Mammary epithelial cell (primary cell): ENCODE measurements at regions of chr9 and their contacts with region 1.

Region 1: GRCh38 chr9:119365291-119366027 is 3.8 kb downstream of the BRINP1 start:
- DNase-seq: peak; percentile 40
- H3K4me3 ChIP-seq: no peak overlapping the region
- H3K27ac ChIP-seq: no peak overlapping the region
- H3K4me1 ChIP-seq: peaks cover 8% of the 10 kb centered on the region
- H3K27me3 ChIP-seq: peaks cover 9% of the 10 kb centered on the region
- CTCF ChIP-seq: peak; percentile 59 to 83

Region 2: DNA sequence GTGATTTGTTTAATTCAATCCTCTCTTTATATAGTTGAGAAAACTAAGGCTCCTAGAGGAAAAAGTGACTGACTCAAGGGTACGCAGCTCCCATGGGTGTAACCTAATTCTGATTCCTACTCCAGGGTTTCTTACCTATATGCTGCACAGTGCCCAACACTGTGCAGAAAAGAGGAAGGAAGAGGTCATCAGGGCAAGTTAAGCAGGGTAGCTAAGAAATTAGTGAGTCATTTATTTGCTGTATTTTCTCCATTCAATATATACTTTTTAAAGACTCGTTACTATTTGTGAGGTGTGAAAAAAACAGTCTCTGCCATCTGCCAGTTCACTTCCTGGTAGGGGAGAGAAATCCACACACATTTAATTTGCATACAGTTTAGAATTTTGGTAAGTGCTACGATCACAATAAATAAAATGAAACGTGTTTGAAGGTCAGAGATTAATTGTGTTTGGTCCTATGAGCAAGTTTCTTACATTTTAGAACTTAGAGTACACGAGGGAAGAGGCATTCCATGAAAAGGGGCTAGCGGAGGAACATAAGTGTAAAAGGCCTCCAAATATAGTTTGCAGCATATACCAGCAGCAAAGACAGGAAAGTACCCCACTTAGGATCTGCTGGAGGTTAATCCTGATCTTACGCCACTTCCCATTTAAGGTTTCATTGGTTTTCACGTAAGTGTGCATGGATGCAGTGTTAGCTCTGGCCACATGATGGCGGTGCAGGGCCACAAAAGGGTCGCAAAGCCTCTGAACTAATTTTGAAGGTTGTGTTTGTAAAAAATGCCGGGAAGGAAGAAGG is 1721.1 kb before region 1 on chr9:
- CTCF ChIA-PET with region 1: no interaction called
- dilution Hi-C with region 1: no loop called
- in situ Hi-C with region 1: no loop called
- intact Hi-C with region 1: loop called (anchors 5 kb)
- DNase-seq: peak; percentile 55
- H3K4me3 ChIP-seq: peak overlapping the region; percentile 5 to 36 (median 24)
- H3K27ac ChIP-seq: no peak overlapping the region
- H3K4me1 ChIP-seq: no peaks in the 10 kb centered on the region
- H3K27me3 ChIP-seq: peaks cover 5% of the 10 kb centered on the region
- CTCF ChIP-seq: peak; percentile 98 to 99

Region 3: DNA sequence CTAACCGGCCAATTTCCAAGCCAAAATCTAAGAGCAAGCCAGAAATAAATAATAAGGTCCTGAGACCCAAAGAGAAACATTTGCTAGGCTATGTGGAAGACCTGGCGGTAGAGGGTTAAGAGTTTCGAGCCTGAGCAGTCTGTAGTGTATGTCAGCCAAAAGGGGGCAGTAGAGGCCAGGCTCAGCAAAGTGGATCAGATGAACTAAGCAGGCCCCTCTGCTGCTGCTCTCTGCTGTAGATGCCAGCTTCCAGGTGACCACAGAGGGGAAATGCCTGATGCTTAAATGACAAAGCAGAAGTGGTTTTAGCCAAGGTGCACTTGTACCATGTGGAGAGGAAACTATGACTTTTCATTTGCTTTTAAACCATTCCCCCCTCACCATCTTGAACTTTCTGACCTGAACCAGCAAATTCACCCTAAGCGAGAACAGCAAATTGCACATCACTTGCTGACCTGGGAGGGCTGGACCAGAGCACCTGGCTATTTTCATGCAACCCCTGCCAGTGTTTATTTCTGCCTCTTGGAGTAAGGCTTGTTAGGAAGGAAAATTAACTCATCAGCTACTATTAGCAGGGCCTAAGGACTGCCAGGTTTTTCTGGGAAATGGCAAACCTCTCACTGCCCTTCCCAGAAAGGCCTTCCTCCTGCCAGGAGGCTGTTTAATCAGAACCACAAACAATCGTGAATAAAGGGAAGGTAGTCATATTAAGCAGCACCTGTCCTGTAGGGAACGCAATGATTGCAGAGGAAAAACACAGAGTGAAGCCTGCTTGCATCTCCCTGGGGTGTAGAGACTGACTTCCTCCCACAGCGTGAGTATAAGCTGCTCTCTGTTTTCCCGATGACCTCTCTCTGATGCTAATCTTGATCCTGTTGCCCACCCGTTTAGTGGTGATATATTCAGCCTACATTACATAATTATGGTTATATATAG is 843.1 kb before region 1 on chr9:
- CTCF ChIA-PET with region 1: no interaction called
- dilution Hi-C with region 1: no loop called
- in situ Hi-C with region 1: loop called in 1 of 2 experiments (anchors 10 kb)
- intact Hi-C with region 1: loop called (anchors 1 kb)
- DNase-seq: peak; percentile 45
- H3K4me3 ChIP-seq: no peak overlapping the region
- H3K27ac ChIP-seq: no peak overlapping the region
- H3K4me1 ChIP-seq: no peaks in the 10 kb centered on the region
- H3K27me3 ChIP-seq: peaks cover 3% of the 10 kb centered on the region
- CTCF ChIP-seq: peak; percentile 67 to 80

Region 4: GRCh38 chr9:118751848-118752223 is 613.6 kb before region 1 on chr9:
- CTCF ChIA-PET with region 1: no interaction called
- dilution Hi-C with region 1: no loop called
- in situ Hi-C with region 1: no loop called
- intact Hi-C with region 1: loop called (anchors 5 kb)
- DNase-seq: no peak
- H3K4me3 ChIP-seq: no peak overlapping the region
- H3K27ac ChIP-seq: no peak overlapping the region
- H3K4me1 ChIP-seq: no peaks in the 10 kb centered on the region
- H3K27me3 ChIP-seq: no peaks in the 10 kb centered on the region
- CTCF ChIP-seq: no peak

Region 5: GRCh38 chr9:119004620-119004994 is 360.9 kb before region 1 on chr9:
- CTCF ChIA-PET with region 1: no interaction called
- dilution Hi-C with region 1: no loop called
- in situ Hi-C with region 1: no loop called
- intact Hi-C with region 1: loop called (anchors 5 kb)
- DNase-seq: peak; percentile 57
- H3K4me3 ChIP-seq: no peak overlapping the region
- H3K27ac ChIP-seq: no peak overlapping the region
- H3K4me1 ChIP-seq: no peaks in the 10 kb centered on the region
- H3K27me3 ChIP-seq: no peaks in the 10 kb centered on the region
- CTCF ChIP-seq: no peak

Region 6: DNA sequence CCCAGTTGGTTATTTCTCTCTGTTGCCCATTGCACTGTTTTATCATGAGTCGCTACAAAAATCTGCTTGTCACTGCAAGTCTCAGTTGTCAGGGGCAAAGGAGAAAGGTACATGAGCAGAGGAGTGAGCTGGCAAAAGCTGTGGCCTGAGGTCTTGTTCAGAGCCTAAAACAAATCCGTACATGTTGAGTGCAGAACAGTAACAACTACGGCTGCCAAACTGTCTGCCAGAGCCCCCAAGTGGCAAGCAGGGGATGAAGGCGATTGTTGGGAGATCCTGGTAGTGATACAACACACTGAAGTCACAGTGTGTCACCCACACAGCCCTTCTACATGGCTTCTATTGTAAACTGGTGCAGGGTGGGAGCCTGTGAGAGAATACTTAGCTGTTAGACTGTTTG is 47.1 kb before region 1 on chr9:
- CTCF ChIA-PET with region 1: no interaction called
- dilution Hi-C with region 1: no loop called
- in situ Hi-C with region 1: no loop called
- intact Hi-C with region 1: loop called (anchors 1 kb)
- DNase-seq: peak; percentile 80
- H3K4me3 ChIP-seq: no peak overlapping the region
- H3K27ac ChIP-seq: no peak overlapping the region
- H3K4me1 ChIP-seq: no peaks in the 10 kb centered on the region
- H3K27me3 ChIP-seq: no peaks in the 10 kb centered on the region
- CTCF ChIP-seq: peak in 1 of 2 donors; percentile 40

Region 7: GRCh38 chr9:119398350-119398749 is 32.9 kb after region 1 on chr9:
- CTCF ChIA-PET with region 1: no interaction called
- dilution Hi-C with region 1: no loop called
- in situ Hi-C with region 1: no loop called
- intact Hi-C with region 1: no loop called
- DNase-seq: no peak
- H3K4me3 ChIP-seq: no peak overlapping the region
- H3K27ac ChIP-seq: no peak overlapping the region
- H3K4me1 ChIP-seq: no peaks in the 10 kb centered on the region
- H3K27me3 ChIP-seq: no peaks in the 10 kb centered on the region
- CTCF ChIP-seq: no peak

Region 8: GRCh38 chr9:119509291-119509905 is 143.9 kb after region 1 on chr9:
- CTCF ChIA-PET with region 1: no interaction called
- dilution Hi-C with region 1: no loop called
- in situ Hi-C with region 1: no loop called
- intact Hi-C with region 1: no loop called
- DNase-seq: peak; percentile 6
- H3K4me3 ChIP-seq: no peak overlapping the region
- H3K27ac ChIP-seq: no peak overlapping the region
- H3K4me1 ChIP-seq: no peaks in the 10 kb centered on the region
- H3K27me3 ChIP-seq: no peaks in the 10 kb centered on the region
- CTCF ChIP-seq: no peak